ENCODE measurements at regions of chr7 and their contacts with region 1.

Region 1: GRCh38 chr7:131945313-131945911 is 389.0 kb upstream of the PODXL start:
- DNase-seq: peak; percentile 46
- H3K4me3 ChIP-seq: no peak overlapping the region
- H3K27ac ChIP-seq: no peak overlapping the region
- H3K4me1 ChIP-seq: peaks cover 9% of the 10 kb centered on the region
- H3K27me3 ChIP-seq: peaks cover 8 to 19% of the 10 kb centered on the region in 2 experiments
- CTCF ChIP-seq: peak; percentile 89 to 93
- POLR2A ChIP-seq: no peak

Region 2: GRCh38 chr7:131688738-131689661 is 256.4 kb before region 1 on chr7:
- CTCF ChIA-PET with region 1: interaction called, 3 read pairs
- POLR2A ChIA-PET with region 1: no interaction called
- dilution Hi-C with region 1: no loop called
- intact Hi-C with region 1: loop called (anchors 10 kb)
- DNase-seq: peak; percentile 61
- H3K4me3 ChIP-seq: no peak overlapping the region
- H3K27ac ChIP-seq: no peak overlapping the region
- H3K4me1 ChIP-seq: no peaks in the 10 kb centered on the region
- H3K27me3 ChIP-seq: peaks cover 0 to 2% of the 10 kb centered on the region in 2 experiments
- CTCF ChIP-seq: peak; percentile 89 to 94
- POLR2A ChIP-seq: no peak

Region 3: GRCh38 chr7:131819891-131820290 is 125.5 kb before region 1 on chr7:
- CTCF ChIA-PET with region 1: no interaction called
- POLR2A ChIA-PET with region 1: no interaction called
- dilution Hi-C with region 1: no loop called
- intact Hi-C with region 1: no loop called
- DNase-seq: no peak
- H3K4me3 ChIP-seq: no peak overlapping the region
- H3K27ac ChIP-seq: no peak overlapping the region
- H3K4me1 ChIP-seq: no peaks in the 10 kb centered on the region
- H3K27me3 ChIP-seq: peaks cover 0 to 8% of the 10 kb centered on the region in 2 experiments
- CTCF ChIP-seq: no peak
- POLR2A ChIP-seq: no peak

Region 4: DNA sequence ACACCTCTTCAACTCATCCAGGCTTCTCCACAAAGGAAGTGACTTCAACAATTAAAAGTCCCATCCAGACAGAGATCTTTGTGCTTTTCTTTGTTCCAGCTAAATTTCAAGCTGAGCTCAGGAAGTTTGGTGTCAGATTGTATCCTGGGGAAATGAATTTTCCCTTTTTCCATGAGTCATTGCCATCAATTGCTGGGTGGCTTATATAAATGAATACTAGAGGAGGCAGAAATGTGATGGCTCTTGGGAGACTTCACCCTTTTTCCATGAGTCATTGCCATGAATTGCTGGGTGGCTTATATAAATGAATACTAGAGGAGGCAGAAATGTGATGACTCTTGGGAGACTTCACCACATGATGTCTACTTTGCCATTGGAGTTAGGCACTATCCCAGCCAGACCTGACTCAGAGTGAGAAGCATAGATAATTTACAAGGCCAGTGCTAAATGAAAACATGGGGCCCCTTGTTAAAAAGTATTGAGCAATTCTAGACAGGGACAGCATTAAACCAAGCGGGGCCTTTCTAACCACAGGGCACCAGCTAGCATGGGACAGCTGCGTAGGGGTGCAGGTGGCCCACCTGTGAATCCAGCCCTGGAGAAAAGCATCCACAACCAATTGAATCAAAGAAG is 49.8 kb before region 1 on chr7:
- CTCF ChIA-PET with region 1: interaction called, 5 read pairs
- POLR2A ChIA-PET with region 1: no interaction called
- dilution Hi-C with region 1: no loop called
- intact Hi-C with region 1: loop called (anchors 2 kb)
- DNase-seq: peak; percentile 93
- H3K4me3 ChIP-seq: no peak overlapping the region
- H3K27ac ChIP-seq: peak overlapping the region; percentile 95
- H3K4me1 ChIP-seq: peaks cover 23% of the 10 kb centered on the region
- H3K27me3 ChIP-seq: no peaks in the 10 kb centered on the region
- CTCF ChIP-seq: no peak
- POLR2A ChIP-seq: no peak

Region 5: GRCh38 chr7:132049462-132050304 is 104.3 kb after region 1 on chr7:
- CTCF ChIA-PET with region 1: interaction called, 9 read pairs
- POLR2A ChIA-PET with region 1: no interaction called
- dilution Hi-C with region 1: no loop called
- intact Hi-C with region 1: loop called (anchors 1 kb)
- DNase-seq: peak; percentile 44
- H3K4me3 ChIP-seq: no peak overlapping the region
- H3K27ac ChIP-seq: no peak overlapping the region
- H3K4me1 ChIP-seq: no peaks in the 10 kb centered on the region
- H3K27me3 ChIP-seq: peaks cover 24 to 28% of the 10 kb centered on the region in 2 experiments
- CTCF ChIP-seq: peak; percentile 72 to 75
- POLR2A ChIP-seq: no peak

Region 6: DNA sequence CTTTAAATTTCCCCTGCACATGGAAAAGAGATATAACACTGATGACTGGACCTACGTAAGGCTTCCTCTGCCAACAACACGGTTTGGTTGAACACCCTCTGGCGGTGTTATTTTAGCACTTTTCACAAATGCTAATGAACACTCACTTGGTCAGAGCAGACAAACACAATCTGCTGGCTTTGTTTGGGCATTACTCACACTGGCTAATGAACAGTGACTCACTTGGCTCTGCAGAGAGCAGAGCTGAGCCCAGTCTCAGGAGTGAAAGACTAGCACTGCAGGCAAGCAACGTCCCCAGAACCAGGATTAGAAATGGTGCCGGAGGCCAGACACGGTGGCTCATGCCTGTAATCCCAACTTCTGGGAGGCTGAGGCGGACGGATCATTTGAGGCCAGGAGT is 200.1 kb after region 1 on chr7:
- CTCF ChIA-PET with region 1: interaction called, 6 read pairs
- POLR2A ChIA-PET with region 1: no interaction called
- dilution Hi-C with region 1: no loop called
- intact Hi-C with region 1: loop called (anchors 2 kb)
- DNase-seq: peak; percentile 88
- H3K4me3 ChIP-seq: no peak overlapping the region
- H3K27ac ChIP-seq: peak overlapping the region; percentile 49
- H3K4me1 ChIP-seq: peaks cover 8% of the 10 kb centered on the region
- H3K27me3 ChIP-seq: no peaks in the 10 kb centered on the region
- CTCF ChIP-seq: peak in 1 of 2 donors; percentile 18
- POLR2A ChIP-seq: no peak

Region 7: GRCh38 chr7:132250883-132251653 is 305.7 kb after region 1 on chr7:
- CTCF ChIA-PET with region 1: interaction called, 4 read pairs
- POLR2A ChIA-PET with region 1: no interaction called
- dilution Hi-C with region 1: no loop called
- intact Hi-C with region 1: loop called (anchors 5 kb)
- DNase-seq: no peak
- H3K4me3 ChIP-seq: no peak overlapping the region
- H3K27ac ChIP-seq: no peak overlapping the region
- H3K4me1 ChIP-seq: peaks cover 7% of the 10 kb centered on the region
- H3K27me3 ChIP-seq: no peaks in the 10 kb centered on the region
- CTCF ChIP-seq: no peak
- POLR2A ChIP-seq: no peak

Region 8: DNA sequence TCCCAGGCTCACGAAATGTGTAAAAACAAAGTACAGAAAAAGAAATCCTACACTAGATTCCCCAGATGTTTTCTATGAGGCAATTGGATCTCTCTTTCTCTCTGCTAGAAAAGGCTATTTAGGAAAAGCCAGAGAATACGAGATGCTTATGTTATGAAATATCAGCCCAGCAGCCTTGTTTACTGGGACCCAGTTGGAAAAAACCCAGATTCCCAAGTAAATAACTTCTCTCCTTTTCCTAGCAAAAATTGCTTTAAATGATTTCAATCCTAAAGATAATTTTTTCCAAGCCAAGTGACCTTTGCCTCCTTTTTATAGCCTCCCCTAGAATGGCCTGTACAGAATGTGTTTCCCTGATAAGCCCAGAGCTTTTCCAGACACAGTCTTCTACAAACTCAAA is 431.6 kb after region 1 on chr7:
- CTCF ChIA-PET with region 1: no interaction called
- POLR2A ChIA-PET with region 1: no interaction called
- dilution Hi-C with region 1: no loop called
- intact Hi-C with region 1: loop called (anchors 10 kb)
- DNase-seq: peak; percentile 71
- H3K4me3 ChIP-seq: no peak overlapping the region
- H3K27ac ChIP-seq: no peak overlapping the region
- H3K4me1 ChIP-seq: peaks cover under 1% of the 10 kb centered on the region
- H3K27me3 ChIP-seq: no peaks in the 10 kb centered on the region
- CTCF ChIP-seq: no peak
- POLR2A ChIP-seq: no peak